IMR-90 (cell line): ENCODE measurements at regions of chr10 and their contacts with region 1.

Region 1: DNA sequence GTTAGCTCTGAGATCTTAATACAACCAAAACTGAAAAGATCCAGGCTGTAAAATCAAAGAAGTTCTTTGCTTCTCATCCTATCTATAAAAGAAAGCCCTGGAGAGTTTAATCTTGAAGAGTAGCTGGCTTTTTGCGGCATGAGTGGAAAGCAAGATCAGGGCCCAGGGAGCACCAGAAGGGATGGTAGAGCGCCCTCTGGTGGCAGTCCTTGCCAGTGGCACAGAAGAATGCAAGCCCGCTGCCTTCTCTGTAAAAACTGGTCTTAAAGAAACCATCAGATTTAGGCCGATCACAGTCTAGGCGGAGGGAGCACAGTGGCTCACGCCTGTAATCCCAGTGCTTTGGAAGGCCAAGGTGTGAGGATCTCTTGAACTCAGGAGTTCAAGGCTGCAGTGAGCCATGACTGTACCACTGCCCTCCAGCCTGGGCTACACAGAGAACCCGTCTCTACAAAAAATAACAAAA is 35.6 kb downstream of the CPN1 start:
- DNase-seq: peak; percentile 81
- ATAC-seq: peak; percentile 92
- H3K4me3 ChIP-seq: no peak overlapping the region
- H3K27ac ChIP-seq: no peak overlapping the region
- H3K4me1 ChIP-seq: peaks cover 4% of the 10 kb centered on the region
- H3K27me3 ChIP-seq: no peaks in the 10 kb centered on the region
- CTCF ChIP-seq: peak; percentile 93
- POLR2A ChIP-seq: no peak
- RAD21 ChIP-seq: peak; percentile 94

Region 2: DNA sequence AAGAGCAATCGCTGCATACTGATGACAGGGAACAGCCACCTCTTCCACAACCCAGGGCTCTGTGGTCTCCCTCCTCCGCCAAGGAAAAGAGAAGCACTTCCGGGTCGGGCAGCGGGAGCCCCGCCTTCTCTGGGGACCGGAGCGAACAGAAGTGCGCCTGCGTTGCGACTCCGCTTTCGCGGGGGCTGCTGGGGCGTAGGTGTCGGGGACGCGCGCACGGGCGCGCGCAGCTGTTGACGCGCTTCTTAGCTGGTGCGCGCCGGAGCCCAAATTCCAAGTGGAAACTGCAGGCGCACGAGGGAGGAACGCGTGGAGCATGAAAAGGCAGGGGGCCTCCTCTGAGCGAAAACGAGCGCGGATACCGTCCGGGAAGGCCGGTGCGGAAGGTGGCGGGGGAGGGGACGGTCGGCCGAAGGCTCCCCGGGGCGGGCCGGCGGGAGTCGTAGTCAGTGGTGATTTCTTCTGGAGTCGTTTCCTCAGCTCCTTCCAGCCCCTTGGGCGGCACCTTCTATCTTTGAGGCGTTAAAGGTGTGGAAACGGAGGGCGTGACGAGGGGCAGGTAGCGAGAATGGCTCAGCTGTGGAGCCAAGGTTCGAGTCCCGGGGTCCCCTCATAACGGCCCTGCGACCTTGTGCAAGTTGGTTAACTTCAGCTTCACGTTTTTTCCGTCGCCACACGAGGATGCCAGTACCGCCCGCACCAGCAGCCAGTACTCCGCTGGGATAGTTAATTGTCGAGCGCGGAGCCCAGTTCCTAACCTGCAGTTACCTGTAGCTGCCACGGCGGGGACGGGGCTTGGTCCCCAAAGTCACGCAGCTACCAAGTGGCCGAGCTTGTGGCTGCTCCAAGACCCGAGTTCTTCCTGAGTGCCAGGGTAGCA is 313.8 kb before region 1 on chr10 and contains the starts of genes COX15 and CUTC:
- CTCF ChIA-PET with region 1: no interaction called
- POLR2A ChIA-PET with region 1: no interaction called
- dilution Hi-C with region 1: no loop called
- in situ Hi-C with region 1: no loop called
- intact Hi-C with region 1: loop called (anchors 10 kb)
- DNase-seq: peak; percentile 96
- ATAC-seq: peak; percentile 95
- H3K4me3 ChIP-seq: peak within 1 kb of the TSS; percentile 69
- H3K27ac ChIP-seq: peak within 1 kb of the TSS; percentile 96
- H3K4me1 ChIP-seq: peaks cover 2% of the 10 kb centered on the region; the same call in 1 of the 2 replicates
- H3K27me3 ChIP-seq: no peaks in the 10 kb centered on the region
- CTCF ChIP-seq: peak; percentile 25; the same call in 1 of the 2 replicates
- POLR2A ChIP-seq: peak; percentile 79
- RAD21 ChIP-seq: peak; percentile 30
- total RNA-seq, gene COX15: 40.1 and 41.1 TPM in 2 replicates
- total RNA-seq, gene CUTC: 7.0 and 17.2 TPM in 2 replicates

Region 3: GRCh38 chr10:99854860-99855259 is 191.2 kb before region 1 on chr10:
- CTCF ChIA-PET with region 1: interaction called, 15 read pairs
- POLR2A ChIA-PET with region 1: no interaction called
- dilution Hi-C with region 1: no loop called
- in situ Hi-C with region 1: no loop called
- intact Hi-C with region 1: loop called (anchors 1 kb)
- DNase-seq: peak; percentile 83
- ATAC-seq: peak; percentile 82
- H3K4me3 ChIP-seq: no peak overlapping the region
- H3K27ac ChIP-seq: no peak overlapping the region
- H3K4me1 ChIP-seq: no peaks in the 10 kb centered on the region; the same call in 1 of the 2 replicates
- H3K27me3 ChIP-seq: peaks cover 2% of the 10 kb centered on the region
- CTCF ChIP-seq: peak; percentile 77
- POLR2A ChIP-seq: no peak
- RAD21 ChIP-seq: peak; percentile 86

Region 4: GRCh38 chr10:99966306-99966705 is 79.7 kb before region 1 on chr10:
- CTCF ChIA-PET with region 1: interaction called, 3 read pairs
- POLR2A ChIA-PET with region 1: no interaction called
- dilution Hi-C with region 1: no loop called
- in situ Hi-C with region 1: loop called (anchors 10 kb)
- intact Hi-C with region 1: no loop called
- DNase-seq: peak; percentile 78
- ATAC-seq: peak; percentile 66
- H3K4me3 ChIP-seq: no peak overlapping the region
- H3K27ac ChIP-seq: no peak overlapping the region
- H3K4me1 ChIP-seq: peaks cover 5% of the 10 kb centered on the region
- H3K27me3 ChIP-seq: no peaks in the 10 kb centered on the region
- CTCF ChIP-seq: no peak
- POLR2A ChIP-seq: no peak
- RAD21 ChIP-seq: no peak

Region 5: DNA sequence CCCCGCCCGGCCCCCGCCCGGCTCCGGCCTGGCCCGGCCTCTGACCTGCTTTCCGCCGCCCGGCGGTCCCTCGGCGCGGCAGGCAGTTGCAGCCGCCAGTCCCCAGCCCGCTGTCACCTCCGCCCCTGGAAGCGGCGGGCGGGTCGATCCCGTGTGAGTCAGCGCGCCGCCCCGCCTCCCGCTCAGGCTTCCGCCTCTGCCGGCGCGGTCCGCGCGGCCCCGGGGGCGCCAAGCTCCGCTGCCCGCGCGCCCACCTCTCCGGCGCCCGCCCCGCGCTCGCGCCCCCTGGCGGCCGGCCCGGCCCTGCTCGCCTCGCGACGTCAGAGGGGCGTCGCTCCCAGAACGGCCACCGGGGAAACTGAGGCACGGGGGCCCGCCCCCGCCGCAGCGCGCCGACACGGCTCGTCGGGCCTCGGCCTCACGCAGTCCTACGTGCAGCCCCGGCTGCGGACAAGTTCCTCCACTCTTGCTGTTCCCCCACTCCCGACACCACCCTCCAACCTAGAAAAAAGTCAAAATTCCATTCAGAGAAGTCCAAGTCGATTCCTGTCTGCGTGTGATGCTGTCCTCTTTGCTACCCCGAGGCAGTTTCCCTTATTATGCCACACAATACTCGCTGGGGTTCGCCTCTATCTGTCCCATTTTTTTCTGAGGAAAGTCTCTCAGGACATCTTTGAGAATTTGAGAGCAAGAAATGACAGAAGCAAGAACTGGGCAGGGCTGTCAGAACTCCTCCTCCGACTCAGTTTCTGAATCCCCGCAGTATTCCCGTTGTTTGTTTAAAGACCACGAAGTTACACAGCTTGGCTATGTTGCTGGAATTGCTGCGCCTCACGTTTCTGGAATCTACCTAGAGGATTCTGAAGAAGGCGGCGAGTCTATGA is 36.0 kb before region 1 on chr10 and contains the start of gene DNMBP:
- CTCF ChIA-PET with region 1: interaction called, 13 read pairs
- POLR2A ChIA-PET with region 1: interaction called, 17 read pairs
- dilution Hi-C with region 1: no loop called
- in situ Hi-C with region 1: no loop called
- intact Hi-C with region 1: loop called (anchors 1 kb)
- DNase-seq: peak; percentile 79
- ATAC-seq: peak; percentile 83
- H3K4me3 ChIP-seq: peak within 1 kb of the TSS; percentile 70
- H3K27ac ChIP-seq: peak within 1 kb of the TSS; percentile 66
- H3K4me1 ChIP-seq: peaks cover 13% of the 10 kb centered on the region
- H3K27me3 ChIP-seq: no peaks in the 10 kb centered on the region
- CTCF ChIP-seq: peak; percentile 64
- POLR2A ChIP-seq: 0 out of 2 replicates have a peak, but pooled peaks have one; percentile 26
- RAD21 ChIP-seq: peak; percentile 44
- total RNA-seq, gene DNMBP: 10.9 and 13.6 TPM in 2 replicates